Activated CD4-positive, alpha-beta T cell treated with anti-CD3 and anti-CD28 coated beads for 36 hours (primary cell): ENCODE measurements at regions of chr2 and their contacts with region 1.

Region 1: GRCh38 chr2:173797586-173798263 is 167.4 kb downstream of the SP3 start:
- DNase-seq: no peak
- ATAC-seq: no peak
- H3K4me3 Mint-ChIP-seq: no peak overlapping the region
- H3K27ac Mint-ChIP-seq: no peak overlapping the region
- H3K4me1 Mint-ChIP-seq: no peaks in the 10 kb centered on the region
- H3K27me3 Mint-ChIP-seq: peaks cover 2% of the 10 kb centered on the region

Region 2: DNA sequence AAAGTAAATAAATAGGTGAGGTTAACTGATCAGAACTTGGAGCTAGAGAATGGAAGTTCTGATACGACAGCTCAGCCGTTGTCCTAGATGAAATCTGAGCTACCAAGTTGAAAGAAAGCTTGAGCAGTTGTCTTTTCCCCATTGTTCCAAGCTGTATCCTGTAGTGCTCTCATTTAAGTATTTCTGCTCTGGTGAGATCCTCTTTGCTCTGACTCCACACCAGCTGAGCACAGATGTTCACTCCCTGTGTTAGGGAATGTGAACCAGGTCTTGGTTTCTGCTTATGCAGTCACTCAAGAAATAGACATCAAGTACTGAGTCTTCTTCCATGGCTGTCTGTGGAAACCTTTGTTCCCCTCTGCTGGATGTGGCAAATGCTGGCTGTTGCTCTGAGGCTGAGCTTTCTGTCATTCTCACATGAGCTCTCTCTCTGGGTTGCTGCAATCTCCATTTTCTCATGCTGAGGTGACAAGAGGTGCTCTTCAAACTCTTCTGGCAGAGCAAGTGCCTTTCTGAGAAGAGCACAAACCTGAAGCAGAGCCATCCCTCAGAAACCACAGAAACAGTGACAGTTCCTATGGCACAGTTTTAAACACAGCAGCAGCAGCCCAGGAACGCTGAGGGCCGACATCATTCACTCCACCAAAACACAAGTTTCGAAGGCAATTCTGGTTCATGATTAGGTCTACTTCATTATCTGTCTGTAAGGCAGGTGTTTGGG is 26.6 kb before region 1 on chr2:
- CTCF ChIA-PET with region 1: no interaction called
- POLR2A ChIA-PET with region 1: no interaction called
- intact Hi-C with region 1: no loop called
- DNase-seq: no peak
- ATAC-seq: no peak
- H3K4me3 Mint-ChIP-seq: no peak overlapping the region
- H3K27ac Mint-ChIP-seq: no peak overlapping the region
- H3K4me1 Mint-ChIP-seq: no peaks in the 10 kb centered on the region
- H3K27me3 Mint-ChIP-seq: peaks cover 4% of the 10 kb centered on the region

Region 3: DNA sequence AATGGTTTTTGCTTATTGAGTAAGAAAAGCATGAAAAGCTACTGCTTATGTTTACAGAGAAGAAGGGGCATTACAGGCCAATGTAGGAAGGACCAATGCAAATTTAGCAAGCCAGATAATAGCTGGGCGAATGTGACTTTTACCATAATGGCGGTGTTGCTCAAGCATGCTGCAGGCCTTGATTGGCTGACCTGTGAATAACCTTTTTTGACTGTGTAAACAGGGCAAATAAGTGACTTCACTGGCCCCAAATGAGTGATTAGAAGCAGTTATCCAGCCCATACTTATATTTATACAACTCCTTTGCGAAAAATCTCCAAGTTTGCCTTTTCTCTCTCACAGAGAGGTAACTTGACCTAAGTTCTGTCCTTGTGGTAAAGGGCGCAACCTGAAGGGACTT is 20.6 kb after region 1 on chr2:
- CTCF ChIA-PET with region 1: no interaction called
- POLR2A ChIA-PET with region 1: no interaction called
- intact Hi-C with region 1: loop called in 1 of 2 experiments (anchors 1 kb)
- DNase-seq: no peak
- ATAC-seq: no peak
- H3K4me3 Mint-ChIP-seq: no peak overlapping the region
- H3K27ac Mint-ChIP-seq: no peak overlapping the region
- H3K4me1 Mint-ChIP-seq: no peaks in the 10 kb centered on the region
- H3K27me3 Mint-ChIP-seq: peaks cover 14% of the 10 kb centered on the region